Left cardiac atrium (tissue), 4 donors: ENCODE measurements at regions of chr12 and their contacts with region 1.

Region 1: DNA sequence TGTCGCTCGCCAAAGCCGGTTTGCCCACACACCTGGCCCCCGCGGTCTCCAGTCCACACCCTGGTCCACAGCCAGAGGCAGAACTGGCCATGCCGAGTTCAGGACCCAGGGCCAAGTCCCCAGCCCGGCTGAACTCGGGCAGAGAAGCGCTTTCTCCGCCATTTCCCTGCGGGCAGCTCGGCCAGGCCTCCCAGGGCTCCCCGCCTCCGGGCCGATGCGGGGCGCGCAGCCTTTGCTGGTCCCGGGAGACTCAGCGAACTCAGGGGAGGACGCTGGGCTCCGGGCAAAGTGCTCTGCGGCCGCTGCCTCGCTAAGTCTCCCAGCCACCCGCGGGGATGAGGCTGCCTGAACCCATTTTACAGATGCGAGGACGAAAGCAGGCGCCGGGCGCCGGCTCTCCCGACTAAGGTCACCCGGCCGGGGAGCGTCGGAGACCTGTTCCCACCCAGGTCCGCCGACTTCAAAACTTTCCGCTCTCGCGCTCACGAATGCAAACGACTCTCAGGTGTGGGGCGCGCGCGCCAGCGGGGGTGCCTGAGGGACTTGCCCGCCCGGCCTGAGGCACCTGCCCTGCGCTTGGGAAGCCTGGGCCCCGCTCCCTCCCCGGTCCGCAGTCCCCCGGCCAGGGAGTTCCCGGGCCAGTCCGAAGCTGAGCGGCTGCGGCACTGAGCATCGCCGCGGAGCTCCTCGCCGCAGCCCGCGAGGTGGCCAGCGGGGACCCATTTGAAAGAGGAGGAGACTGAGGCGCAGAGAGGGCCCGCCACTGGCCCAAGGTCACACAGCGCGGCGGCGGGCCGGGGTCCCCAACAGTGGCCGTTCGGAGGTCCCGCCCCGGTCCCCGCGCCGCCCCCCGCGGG is 627 bp downstream of the TESC start:
- DNase-seq: peak; percentile 30
- ATAC-seq: peak; percentile 32 to 39

Region 2: GRCh38 chr12:117037289-117038022 is 61.1 kb before region 1 on chr12:
- intact Hi-C with region 1: loop called in 1 of 2 experiments (anchors 5 kb)
- DNase-seq: peak; percentile 10
- ATAC-seq: no peak

Region 3: DNA sequence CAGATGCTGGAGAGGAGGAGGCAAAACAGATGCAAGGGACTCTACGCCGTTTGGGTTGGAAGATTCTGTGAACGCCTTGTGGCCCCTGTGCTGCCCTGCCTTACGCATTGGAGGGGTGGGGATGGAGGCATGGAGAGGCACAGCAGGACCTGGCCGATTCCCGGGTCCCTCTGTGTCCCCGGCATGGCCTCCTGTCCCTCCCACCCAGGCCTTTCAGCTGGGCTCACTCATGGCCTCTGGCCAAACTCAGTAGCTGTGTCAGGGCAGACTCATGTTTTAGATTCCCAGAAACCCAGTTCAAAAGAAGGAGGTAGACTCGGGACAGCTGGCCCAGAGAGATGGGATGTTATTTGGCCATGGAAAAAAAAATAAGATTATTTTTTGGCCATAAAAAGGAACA is 39.4 kb before region 1 on chr12:
- intact Hi-C with region 1: loop called in 1 of 2 experiments (anchors 5 kb)
- DNase-seq: no peak
- ATAC-seq: peak; percentile 31 to 35

Region 4: DNA sequence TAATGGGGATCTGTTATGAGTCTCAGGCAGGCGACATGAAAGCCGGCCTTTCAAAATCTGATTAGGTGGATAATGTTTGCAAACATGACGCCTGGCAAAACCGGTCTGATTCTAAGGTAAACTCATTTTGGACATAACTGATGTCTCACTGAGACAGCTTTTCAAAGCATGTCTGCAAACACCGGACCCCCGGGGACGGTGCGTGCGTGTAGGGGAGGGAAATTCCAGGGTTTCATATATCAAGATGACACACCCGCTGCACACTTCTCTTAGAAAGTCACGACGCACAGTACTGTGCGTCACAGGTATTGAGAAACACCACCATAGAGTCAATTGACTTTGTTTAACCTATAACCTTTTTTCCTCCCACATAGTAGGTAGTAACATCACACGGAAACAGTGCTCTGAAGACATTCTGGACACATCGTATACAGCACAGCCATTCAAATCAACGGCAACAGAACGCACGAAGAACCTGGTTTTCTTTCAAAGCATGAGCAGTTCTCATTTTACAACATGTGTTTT is 44.5 kb after region 1 on chr12:
- intact Hi-C with region 1: no loop called
- DNase-seq: no peak
- ATAC-seq: no peak